Activated CD4-positive, alpha-beta T cell treated with anti-CD3 and anti-CD28 coated beads for 36 hours (primary cell): ENCODE measurements at regions of chr5 and their contacts with region 1.

Region 1: DNA sequence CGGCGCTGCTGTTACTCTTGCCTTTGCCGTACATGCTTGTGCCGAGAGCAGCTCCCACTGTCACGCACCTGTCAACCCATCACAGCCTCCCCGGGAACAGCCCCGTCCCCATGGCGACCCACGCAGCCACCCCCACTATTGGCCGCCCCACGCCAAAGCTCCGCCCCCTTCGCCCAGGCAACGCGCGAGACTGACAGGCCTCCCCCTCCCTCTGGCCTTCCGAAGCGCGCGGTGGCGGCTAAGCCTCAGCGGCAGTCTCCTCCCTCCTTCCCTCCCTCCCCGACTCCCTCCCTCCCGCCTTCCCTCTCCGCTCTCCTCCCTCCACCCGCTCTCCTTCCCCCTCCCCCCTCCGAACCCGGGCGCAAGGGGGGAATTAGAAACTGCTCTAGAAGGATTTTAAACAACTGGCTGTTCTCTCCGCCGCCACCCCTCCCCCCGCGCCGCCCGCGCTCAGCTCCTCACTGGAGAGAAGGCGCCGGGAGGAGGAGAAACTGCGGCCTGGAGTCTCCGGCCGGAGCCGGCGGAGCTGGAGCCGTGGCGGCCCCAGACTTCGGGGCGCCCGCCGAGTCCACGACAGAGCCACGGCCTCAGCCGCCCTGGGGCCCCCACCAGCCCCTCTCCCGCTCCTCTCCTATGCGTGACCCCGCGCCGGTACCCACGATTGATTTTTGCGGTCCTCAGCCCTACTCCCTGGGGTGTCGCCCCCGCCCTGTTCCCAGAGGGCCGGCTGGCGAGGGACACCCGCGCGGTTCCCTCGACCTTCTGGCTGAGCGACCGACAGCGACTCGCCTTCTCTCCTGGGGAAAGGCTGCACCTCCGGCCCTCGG is at the start of gene SSBP2:
- DNase-seq: peak; percentile 98
- ATAC-seq: peak; percentile 91
- H3K4me3 Mint-ChIP-seq: peak within 1 kb of the TSS; percentile 89
- H3K27ac Mint-ChIP-seq: peak within 1 kb of the TSS; percentile 78
- H3K4me1 Mint-ChIP-seq: peaks cover 33% of the 10 kb centered on the region
- H3K27me3 Mint-ChIP-seq: no peaks in the 10 kb centered on the region
- total RNA-seq, gene SSBP2: 16.9 to 21.4 TPM

Region 2: GRCh38 chr5:81425569-81425968 is 325.7 kb before region 1 on chr5:
- CTCF ChIA-PET with region 1: interaction called, 3 read pairs
- POLR2A ChIA-PET with region 1: no interaction called
- intact Hi-C with region 1: loop called (anchors 2 to 10 kb)
- DNase-seq: no peak
- ATAC-seq: peak; percentile 70
- H3K4me3 Mint-ChIP-seq: no peak overlapping the region
- H3K27ac Mint-ChIP-seq: no peak overlapping the region
- H3K4me1 Mint-ChIP-seq: peaks cover 30% of the 10 kb centered on the region
- H3K27me3 Mint-ChIP-seq: no peaks in the 10 kb centered on the region

Region 3: GRCh38 chr5:81779125-81779915 is 28.1 kb after region 1 on chr5:
- CTCF ChIA-PET with region 1: interaction called, 4 read pairs
- POLR2A ChIA-PET with region 1: interaction called, 7 read pairs
- intact Hi-C with region 1: loop called (anchors 1 to 2 kb)
- DNase-seq: peak; percentile 63
- ATAC-seq: peak; percentile 75
- H3K4me3 Mint-ChIP-seq: peak overlapping the region; percentile 70
- H3K27ac Mint-ChIP-seq: peak overlapping the region; percentile 90
- H3K4me1 Mint-ChIP-seq: peaks cover 19% of the 10 kb centered on the region
- H3K27me3 Mint-ChIP-seq: no peaks in the 10 kb centered on the region

Region 4: DNA sequence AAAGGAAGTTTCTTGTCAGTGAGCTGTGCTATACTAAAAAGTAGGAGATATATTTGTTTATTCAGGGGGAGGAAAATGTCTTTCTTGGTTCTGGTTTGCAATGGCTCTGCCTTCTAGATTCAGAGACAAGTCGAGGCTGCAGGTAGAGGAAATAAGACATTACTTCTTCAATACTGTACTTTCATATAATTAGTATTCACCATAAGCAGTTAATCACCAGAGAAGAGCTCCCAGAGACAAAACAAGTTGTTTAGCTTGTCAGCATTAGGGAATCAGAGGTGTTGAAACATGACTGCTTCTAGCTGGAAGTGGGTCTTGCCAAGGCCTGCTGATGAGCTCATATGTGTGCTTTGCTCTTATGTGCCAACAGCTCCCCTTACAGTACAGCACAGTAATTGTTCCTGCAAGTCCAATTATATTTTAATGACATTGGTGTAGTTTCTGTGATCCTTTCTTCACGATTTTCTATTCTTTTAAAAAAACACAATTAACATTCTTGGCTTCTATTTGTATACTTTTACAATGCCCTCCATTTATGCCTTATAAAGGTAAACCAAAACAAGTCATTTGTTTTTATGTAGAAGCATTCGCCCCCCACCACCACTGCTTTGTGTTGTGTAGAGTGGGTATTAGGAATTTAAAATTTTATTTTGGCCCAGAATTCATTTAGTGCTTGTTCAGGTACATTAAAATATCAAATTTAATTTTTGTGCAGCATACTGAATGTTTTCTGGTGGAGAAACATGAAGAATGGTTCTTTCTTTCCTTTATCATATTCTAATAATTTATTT is 414.7 kb after region 1 on chr5:
- CTCF ChIA-PET with region 1: interaction called, 3 read pairs
- POLR2A ChIA-PET with region 1: no interaction called
- intact Hi-C with region 1: loop called in 1 of 2 experiments (anchors 5 kb)
- DNase-seq: peak; percentile 53
- ATAC-seq: peak; percentile 99
- H3K4me3 Mint-ChIP-seq: no peak overlapping the region
- H3K27ac Mint-ChIP-seq: no peak overlapping the region
- H3K4me1 Mint-ChIP-seq: peaks cover 14% of the 10 kb centered on the region
- H3K27me3 Mint-ChIP-seq: no peaks in the 10 kb centered on the region

Region 5: GRCh38 chr5:82278095-82278918 is 527.1 kb after region 1 on chr5 and contains the start of gene RPS23:
- CTCF ChIA-PET with region 1: no interaction called
- POLR2A ChIA-PET with region 1: interaction called, 8 read pairs
- intact Hi-C with region 1: loop called in 1 of 2 experiments (anchors 1 kb)
- DNase-seq: peak; percentile 93
- ATAC-seq: peak; percentile 95
- H3K4me3 Mint-ChIP-seq: peak within 1 kb of the TSS; percentile 86
- H3K27ac Mint-ChIP-seq: peak within 1 kb of the TSS; percentile 99
- H3K4me1 Mint-ChIP-seq: peaks cover 46% of the 10 kb centered on the region
- H3K27me3 Mint-ChIP-seq: no peaks in the 10 kb centered on the region
- total RNA-seq, gene RPS23: 2,831 to 3,226 TPM